Activated CD4-positive, alpha-beta memory T cell treated with anti-CD3 and anti-CD28 coated beads for 36 hours (primary cell): ENCODE measurements at regions of chr1 and their contacts with region 1.

Region 1: DNA sequence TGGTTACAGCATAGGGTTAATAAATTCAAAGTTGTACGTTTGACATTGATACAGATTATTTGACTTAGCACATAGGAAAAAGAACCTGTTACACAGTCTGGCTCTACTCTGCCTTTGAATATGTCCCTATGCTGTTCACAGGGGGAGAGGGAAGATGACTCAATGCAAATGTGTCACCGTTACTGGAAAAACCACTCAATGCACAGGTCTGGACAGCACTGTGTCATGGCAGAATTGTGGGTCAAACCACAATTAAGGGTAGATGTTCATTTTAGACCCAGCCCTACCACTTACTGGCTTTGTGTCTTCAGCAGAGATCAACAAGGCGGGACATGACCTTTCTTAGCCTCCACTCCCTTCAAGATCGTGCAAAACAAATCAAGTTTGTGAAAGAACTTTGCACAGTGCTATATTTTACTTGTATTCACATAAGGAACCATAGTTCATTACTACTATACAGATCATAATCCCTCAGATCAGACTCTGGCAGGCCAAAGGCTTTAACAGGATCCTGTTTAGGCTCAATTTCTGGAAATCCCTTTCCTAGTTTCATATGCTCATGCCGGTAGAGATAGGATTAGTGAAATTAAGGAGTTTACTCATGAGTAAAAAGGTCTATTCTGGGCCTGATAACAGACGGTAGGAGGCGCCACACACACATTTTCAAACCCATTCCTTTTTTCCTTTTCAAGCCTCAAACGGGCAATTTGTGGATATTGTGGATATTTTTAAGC is 22.1 kb downstream of the EIF2D start:
- DNase-seq: peak; percentile 83
- H3K4me3 Mint-ChIP-seq: peak overlapping the region; percentile 50
- H3K27ac Mint-ChIP-seq: peak overlapping the region; percentile 99
- H3K4me1 Mint-ChIP-seq: peaks cover 78% of the 10 kb centered on the region
- H3K27me3 Mint-ChIP-seq: no peaks in the 10 kb centered on the region

Region 2: DNA sequence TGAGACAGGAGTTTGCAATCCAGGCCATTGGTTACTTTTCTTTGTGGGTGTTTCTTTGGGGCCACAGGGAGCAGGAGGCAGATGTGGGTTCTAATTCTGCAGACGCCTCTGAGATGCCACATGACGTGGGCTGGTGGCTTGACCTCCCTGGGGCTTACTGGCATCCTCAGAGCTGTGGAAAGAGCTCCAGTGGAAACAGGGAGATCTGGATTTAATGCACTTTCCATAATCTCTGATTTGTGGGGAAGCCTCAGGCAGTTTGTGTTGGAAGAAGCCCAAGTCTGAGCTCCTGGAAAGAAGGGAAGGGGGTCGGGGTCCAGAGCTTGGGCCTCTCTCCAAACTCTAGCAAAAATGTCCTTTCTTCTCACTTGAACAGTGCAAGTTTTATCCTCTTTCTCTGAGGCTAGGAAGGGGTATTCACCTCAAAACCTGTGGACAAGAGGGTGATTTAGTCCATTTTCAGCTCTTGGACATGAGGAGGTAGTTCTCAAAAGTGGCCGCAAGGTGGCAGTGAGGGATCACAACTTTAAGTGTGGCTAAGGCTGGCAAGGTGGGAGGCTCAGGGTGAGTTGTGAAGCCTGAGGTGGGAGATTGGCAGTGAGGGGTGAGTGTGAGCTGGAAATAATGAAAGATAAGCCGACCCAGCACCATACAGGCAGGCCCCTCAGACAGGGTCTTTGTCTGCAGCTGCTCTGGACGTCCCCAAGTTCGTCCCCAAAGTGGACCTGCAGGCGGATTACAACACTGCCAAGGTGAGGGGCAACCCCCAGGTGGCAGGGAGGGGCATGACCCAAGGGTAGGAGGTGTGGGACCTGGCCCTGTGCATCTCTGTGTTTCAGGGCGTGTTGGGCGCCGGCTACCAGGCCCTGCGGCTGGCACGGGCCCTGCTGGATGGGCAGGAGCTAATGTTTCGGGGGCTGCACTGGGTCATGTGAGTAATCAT is 110.7 kb before region 1 on chr1:
- CTCF ChIA-PET with region 1: interaction called, 42 read pairs
- POLR2A ChIA-PET with region 1: no interaction called
- intact Hi-C with region 1: no loop called
- DNase-seq: peak; percentile 79
- H3K4me3 Mint-ChIP-seq: no peak overlapping the region
- H3K27ac Mint-ChIP-seq: peak overlapping the region; percentile 26
- H3K4me1 Mint-ChIP-seq: peaks cover 37% of the 10 kb centered on the region
- H3K27me3 Mint-ChIP-seq: no peaks in the 10 kb centered on the region

Region 3: GRCh38 chr1:206544562-206545257 is 45.5 kb before region 1 on chr1:
- CTCF ChIA-PET with region 1: interaction called, 588 read pairs
- POLR2A ChIA-PET with region 1: interaction called, 3 read pairs
- intact Hi-C with region 1: no loop called
- DNase-seq: peak; percentile 88
- H3K4me3 Mint-ChIP-seq: no peak overlapping the region
- H3K27ac Mint-ChIP-seq: peak overlapping the region; percentile 42
- H3K4me1 Mint-ChIP-seq: peaks cover 17% of the 10 kb centered on the region
- H3K27me3 Mint-ChIP-seq: no peaks in the 10 kb centered on the region

Region 4: DNA sequence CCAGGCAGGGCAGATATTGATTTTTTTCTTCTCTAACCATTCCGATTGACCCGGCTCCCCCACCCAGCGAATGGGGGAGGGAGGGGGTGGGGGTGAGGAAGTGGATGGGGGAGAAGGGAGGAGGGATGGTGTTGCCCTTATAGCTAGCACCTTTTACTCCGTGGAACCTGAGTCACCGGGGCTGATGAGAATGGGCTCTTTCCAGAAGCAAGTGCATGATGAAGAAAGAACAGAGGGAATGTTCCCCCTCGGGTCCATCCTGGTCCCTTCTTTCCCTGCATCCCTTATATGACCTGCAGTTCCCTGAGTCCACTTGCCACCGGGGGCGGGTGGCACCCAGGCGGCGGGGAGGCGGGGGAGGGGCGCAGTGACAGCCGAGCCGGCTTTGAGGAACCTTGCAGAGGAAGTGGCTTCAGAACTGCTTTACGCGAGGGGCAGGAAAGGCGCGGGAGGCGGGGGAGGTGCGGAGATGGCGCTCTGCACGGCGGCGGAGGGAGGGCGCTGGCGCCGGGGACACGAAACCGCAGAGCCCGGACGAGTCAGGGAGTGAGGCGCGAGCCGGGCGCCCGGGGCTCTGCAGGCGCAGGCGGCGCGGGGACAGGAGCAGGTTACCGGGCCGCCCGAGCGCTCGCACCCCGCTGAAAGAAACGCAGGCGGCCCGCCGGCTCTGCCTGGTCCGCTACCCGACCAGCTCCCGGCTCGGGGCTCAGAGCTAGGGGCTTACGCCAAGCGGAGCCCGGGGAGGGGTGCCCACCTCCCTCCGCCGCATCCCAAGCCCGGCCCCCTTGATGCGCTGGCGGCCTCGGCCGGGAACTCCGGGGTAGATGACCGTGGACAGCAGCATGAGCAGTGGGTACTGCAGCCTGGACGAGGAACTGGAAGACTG is 33.2 kb before region 1 on chr1:
- CTCF ChIA-PET with region 1: interaction called, 588 read pairs
- POLR2A ChIA-PET with region 1: interaction called, 546 read pairs
- intact Hi-C with region 1: loop called (anchors 1 kb)
- DNase-seq: peak; percentile 94
- H3K4me3 Mint-ChIP-seq: peak overlapping the region; percentile 97
- H3K27ac Mint-ChIP-seq: peak overlapping the region; percentile 99
- H3K4me1 Mint-ChIP-seq: peaks cover 66% of the 10 kb centered on the region
- H3K27me3 Mint-ChIP-seq: no peaks in the 10 kb centered on the region

Region 5: GRCh38 chr1:206575165-206575893 is 14.9 kb before region 1 on chr1:
- CTCF ChIA-PET with region 1: interaction called, 7 read pairs
- POLR2A ChIA-PET with region 1: interaction called, 12 read pairs
- intact Hi-C with region 1: loop called (anchors 1 kb)
- DNase-seq: peak; percentile 67
- H3K4me3 Mint-ChIP-seq: peak overlapping the region; percentile 59
- H3K27ac Mint-ChIP-seq: peak overlapping the region; percentile 99
- H3K4me1 Mint-ChIP-seq: peaks cover 97% of the 10 kb centered on the region
- H3K27me3 Mint-ChIP-seq: no peaks in the 10 kb centered on the region

Region 6: GRCh38 chr1:206635080-206635977 is 45.1 kb after region 1 on chr1 and contains the start of gene DYRK3:
- CTCF ChIA-PET with region 1: interaction called, 10 read pairs
- POLR2A ChIA-PET with region 1: no interaction called
- intact Hi-C with region 1: loop called (anchors 1 kb)
- DNase-seq: peak; percentile 96
- H3K4me3 Mint-ChIP-seq: peak within 1 kb of the TSS; percentile 80
- H3K27ac Mint-ChIP-seq: peak within 1 kb of the TSS; percentile 80
- H3K4me1 Mint-ChIP-seq: peaks cover 25% of the 10 kb centered on the region
- H3K27me3 Mint-ChIP-seq: peaks cover 5% of the 10 kb centered on the region
- total RNA-seq, gene DYRK3: 10.1 to 11.4 TPM

Region 7: GRCh38 chr1:206679738-206680211 is 89.6 kb after region 1 on chr1:
- CTCF ChIA-PET with region 1: no interaction called
- POLR2A ChIA-PET with region 1: no interaction called
- intact Hi-C with region 1: no loop called
- DNase-seq: peak; percentile 31
- H3K4me3 Mint-ChIP-seq: peak overlapping the region; percentile 14
- H3K27ac Mint-ChIP-seq: peak overlapping the region; percentile 38
- H3K4me1 Mint-ChIP-seq: peaks cover 40% of the 10 kb centered on the region
- H3K27me3 Mint-ChIP-seq: peaks cover 1% of the 10 kb centered on the region